ENCODE measurements at regions of chr6 and their contacts with region 1.

Region 1: GRCh38 chr6:28981833-28982475 is 23.2 kb downstream of the ZNF311 start:
- DNase-seq: peak; percentile 38 to 82 (median 66)
- H3K4me3 ChIP-seq: peak overlapping the region; percentile 49 to 98 (median 81)
- H3K27ac ChIP-seq: peak overlapping the region; percentile 5 to 96 (median 86)
- H3K27me3 ChIP-seq: no peaks in the 10 kb centered on the region
- CTCF ChIP-seq: peak in 26 of 56 donors; percentile 1 to 60 (median 19)

Region 2: DNA sequence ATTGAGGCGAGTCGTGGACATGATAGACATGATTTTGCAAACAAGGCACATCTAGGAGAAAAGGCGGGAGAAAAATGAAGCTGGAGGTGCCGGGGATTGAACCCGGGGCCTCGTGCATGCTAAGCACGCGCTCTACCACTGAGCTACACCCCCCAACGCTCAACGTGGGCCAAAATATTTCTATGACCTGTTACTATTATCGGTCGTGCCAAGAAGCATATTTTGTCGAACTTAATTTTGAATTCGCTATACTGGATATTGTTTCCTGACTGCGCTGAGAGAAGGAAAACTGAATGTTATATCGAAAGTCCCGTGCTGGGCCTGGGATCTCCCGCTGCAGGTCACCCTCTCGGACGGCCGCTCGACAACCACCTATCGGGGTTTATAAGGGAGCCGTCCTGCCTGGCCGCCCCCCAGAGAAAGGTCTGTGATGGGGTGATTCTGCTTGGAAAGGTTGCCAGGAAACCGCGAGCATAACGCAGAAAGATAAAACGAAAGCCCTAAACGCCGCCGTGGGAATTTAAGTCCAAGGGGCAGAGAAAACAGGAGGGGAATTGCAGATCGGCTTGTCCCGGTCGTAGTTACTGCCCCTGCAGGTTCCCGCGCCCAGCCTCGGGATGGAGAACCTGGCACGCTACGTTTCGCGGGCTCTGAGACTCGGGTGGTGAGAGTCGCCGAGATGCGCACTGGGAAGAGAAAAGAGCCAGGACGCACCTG is 118.2 kb before region 1 on chr6:
- intact Hi-C with region 1: loop called (anchors 10 kb)
- DNase-seq: peak; percentile 67 to 87 (median 79)
- H3K4me3 ChIP-seq: peak overlapping the region; percentile 52 to 97 (median 82)
- H3K27ac ChIP-seq: peak overlapping the region in 56 of 59 donors; percentile 1 to 92 (median 74)
- H3K27me3 ChIP-seq: no peaks in the 10 kb centered on the region
- CTCF ChIP-seq: peak in 17 of 56 donors; percentile 2 to 40 (median 16)

Region 3: DNA sequence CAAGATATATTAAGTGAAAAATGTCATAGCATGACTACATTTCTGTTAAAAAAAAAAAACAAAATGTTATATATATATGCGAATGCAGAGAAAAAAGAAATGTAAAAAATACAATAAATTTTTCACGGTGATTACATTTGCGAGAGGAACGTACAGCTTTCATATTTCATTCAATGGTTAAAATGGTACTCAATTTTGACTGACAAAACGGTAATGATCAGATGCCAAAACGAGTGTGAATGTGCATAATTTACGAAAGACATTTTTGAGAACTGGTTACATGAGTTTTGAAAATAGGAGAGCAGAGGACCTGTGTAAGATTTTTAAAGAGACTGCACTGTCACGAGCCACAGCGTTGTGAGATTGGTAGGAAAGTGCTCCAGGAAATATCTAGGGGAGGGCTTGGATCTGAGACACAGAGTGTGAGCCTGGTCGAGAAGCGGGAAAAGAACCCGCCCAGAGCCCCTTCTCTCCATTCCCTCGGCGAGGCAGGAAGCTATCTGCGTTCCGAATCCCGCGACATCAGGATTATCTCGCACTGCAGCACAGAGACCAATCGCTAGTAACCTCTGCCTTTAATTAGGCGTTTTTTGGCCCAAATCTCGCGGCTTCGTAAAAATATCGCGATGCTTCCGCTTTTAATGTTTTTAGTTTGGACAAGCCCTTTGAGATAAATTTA is 86.7 kb before region 1 on chr6:
- intact Hi-C with region 1: loop called (anchors 1 to 5 kb)
- DNase-seq: peak; percentile 58 to 96 (median 86)
- H3K4me3 ChIP-seq: peak overlapping the region; percentile 50 to 97 (median 81)
- H3K27ac ChIP-seq: peak overlapping the region; percentile 92 to 100 (median 98)
- H3K27me3 ChIP-seq: no peaks in the 10 kb centered on the region
- CTCF ChIP-seq: peak in 9 of 56 donors; percentile 5 to 28 (median 16)

Region 4: GRCh38 chr6:28956331-28956730 is 25.6 kb before region 1 on chr6:
- intact Hi-C with region 1: loop called in 1 of 2 experiments (anchors 2 kb)
- DNase-seq: no peak
- H3K4me3 ChIP-seq: no peak overlapping the region
- H3K27ac ChIP-seq: no peak overlapping the region
- H3K27me3 ChIP-seq: peaks cover 0 to 9% (median 0%) of the 10 kb centered on the region in 45 donors
- CTCF ChIP-seq: no peak

Region 5: GRCh38 chr6:29016559-29017427 is 34.8 kb after region 1 on chr6:
- intact Hi-C with region 1: loop called in 1 of 2 experiments (anchors 5 kb)
- DNase-seq: peak; percentile 50 to 86 (median 70)
- H3K4me3 ChIP-seq: peak overlapping the region; percentile 26 to 80 (median 59)
- H3K27ac ChIP-seq: peak overlapping the region in 1 of 59 donors; percentile 38
- H3K27me3 ChIP-seq: peaks cover 0 to 76% (median 34%) of the 10 kb centered on the region in 45 donors
- CTCF ChIP-seq: peak; percentile 65 to 96 (median 86)

Measured in dorsolateral prefrontal cortex (tissue), 120 donors.